ENCODE measurements at regions of chr5 and their contacts with region 1.

Region 1: GRCh38 chr5:150560401-150561193 is 52.7 kb downstream of the NDST1 start:
- DNase-seq: peak; percentile 97
- H3K4me3 Mint-ChIP-seq: peak overlapping the region; percentile 17
- H3K27ac Mint-ChIP-seq: peak overlapping the region; percentile 24
- H3K4me1 Mint-ChIP-seq: peaks cover 14% of the 10 kb centered on the region
- H3K27me3 Mint-ChIP-seq: no peaks in the 10 kb centered on the region
- CTCF ChIP-seq: peak; percentile 94

Region 2: DNA sequence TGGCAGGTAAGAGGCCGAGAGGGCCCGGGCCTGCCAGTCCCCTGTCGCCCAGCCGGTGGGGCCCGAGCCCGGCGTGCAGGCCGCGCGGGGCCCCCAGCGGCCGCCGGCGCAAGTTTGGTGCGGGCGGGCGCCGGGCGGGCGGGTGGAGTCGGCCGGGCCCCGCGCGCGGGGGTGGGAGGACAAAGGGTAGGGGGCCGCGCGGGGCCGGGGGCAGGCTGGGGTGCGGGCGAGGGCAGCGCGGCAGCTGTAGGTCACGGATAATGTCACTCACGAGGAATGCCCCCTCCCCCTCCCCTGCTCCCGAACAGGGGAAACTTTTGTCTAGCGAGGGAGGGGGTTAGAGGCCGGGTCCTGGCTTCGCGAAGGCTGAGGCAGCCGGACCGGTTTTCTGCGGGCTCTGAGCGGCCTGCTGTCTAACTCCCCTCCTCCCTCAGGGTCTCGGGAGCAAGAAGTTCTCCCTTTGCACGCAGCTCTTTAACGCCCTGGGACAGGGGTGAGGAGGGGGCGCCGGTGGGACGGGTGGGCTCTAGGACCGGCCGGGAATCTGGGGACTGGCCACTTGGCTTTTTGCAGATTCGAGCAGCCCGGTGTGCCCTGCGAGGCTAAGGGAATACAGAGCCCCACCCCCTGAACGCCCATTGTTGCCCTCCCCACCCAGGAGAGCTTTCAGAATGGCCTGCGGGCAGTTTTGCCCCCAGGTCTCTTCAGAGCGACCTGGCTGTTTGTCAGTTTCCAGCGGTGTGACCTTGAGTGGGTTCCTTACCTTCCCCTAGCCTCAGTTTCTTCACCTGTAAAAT is 74.0 kb before region 1 on chr5:
- CTCF ChIA-PET with region 1: interaction called, 11 read pairs
- POLR2A ChIA-PET with region 1: interaction called, 3 read pairs
- intact Hi-C with region 1: no loop called
- DNase-seq: peak; percentile 51
- H3K4me3 Mint-ChIP-seq: peak overlapping the region; percentile 72
- H3K27ac Mint-ChIP-seq: peak overlapping the region; percentile 63
- H3K4me1 Mint-ChIP-seq: peaks cover 43% of the 10 kb centered on the region
- H3K27me3 Mint-ChIP-seq: no peaks in the 10 kb centered on the region
- CTCF ChIP-seq: peak; percentile 13

Region 3: DNA sequence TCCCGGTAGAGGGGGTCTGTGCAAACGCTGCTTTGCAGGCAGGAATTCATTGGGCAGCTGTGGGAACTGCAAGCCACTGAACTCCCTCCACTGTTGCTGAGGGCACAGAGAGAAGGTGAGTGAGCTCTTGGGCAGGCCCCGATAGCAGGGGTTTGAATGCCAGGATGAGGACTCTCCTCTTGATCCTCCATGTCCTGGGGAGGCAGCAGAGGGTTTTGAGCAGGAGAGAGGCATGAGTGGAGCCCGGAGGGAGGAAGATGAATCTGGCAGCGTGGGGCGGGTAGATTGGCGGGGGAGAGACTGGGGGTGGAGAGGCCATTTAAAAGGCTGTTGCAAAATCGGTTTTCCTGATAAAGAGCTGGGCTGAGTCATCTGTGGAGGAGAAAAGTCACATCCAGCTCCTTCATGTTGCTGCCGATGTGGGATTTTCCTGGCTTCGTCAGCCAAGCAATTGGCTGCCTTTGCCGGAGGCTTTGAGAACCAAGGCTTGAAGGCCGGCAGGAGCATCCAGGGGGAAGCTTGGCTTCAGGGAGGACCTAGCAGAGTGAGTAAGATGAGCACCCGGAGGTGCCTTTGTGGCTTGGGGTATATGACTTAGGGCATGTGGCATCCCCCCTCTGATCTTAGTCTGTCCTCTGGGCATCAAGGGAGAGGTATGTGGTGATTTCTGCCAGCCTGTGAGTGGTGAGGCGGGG is 79.9 kb after region 1 on chr5 and contains the start of gene SYNPO:
- CTCF ChIA-PET with region 1: interaction called, 84 read pairs
- POLR2A ChIA-PET with region 1: interaction called, 7 read pairs
- intact Hi-C with region 1: no loop called
- DNase-seq: peak; percentile 99
- H3K4me3 Mint-ChIP-seq: peak within 1 kb of the TSS; percentile 68
- H3K27ac Mint-ChIP-seq: peak within 1 kb of the TSS; percentile 86
- H3K4me1 Mint-ChIP-seq: peaks cover 94% of the 10 kb centered on the region
- H3K27me3 Mint-ChIP-seq: no peaks in the 10 kb centered on the region
- CTCF ChIP-seq: no peak
- total RNA-seq, gene SYNPO: 6.3 and 7.1 TPM in 2 replicates

Region 4: DNA sequence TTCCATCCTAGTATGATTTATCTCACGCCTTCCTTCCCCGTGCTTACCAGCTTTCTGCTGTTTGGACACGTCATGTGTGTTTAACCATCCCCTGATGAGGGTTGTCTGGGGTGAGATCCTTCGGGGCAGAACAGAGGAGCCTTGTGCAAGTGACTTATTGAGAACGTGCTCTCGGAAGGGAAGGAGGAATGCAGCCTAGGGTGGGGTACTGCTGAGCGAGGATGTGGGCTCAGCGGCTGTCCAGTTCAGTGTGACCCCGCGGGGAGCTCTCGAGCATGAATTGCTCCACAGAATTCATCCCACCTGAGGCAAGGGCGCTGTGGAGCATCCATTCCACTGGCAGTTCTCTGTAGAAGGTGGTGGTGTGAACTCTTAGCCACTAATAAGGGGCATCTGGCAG is 104.4 kb after region 1 on chr5:
- CTCF ChIA-PET with region 1: interaction called, 429 read pairs
- POLR2A ChIA-PET with region 1: interaction called, 3 read pairs
- intact Hi-C with region 1: no loop called
- DNase-seq: no peak
- H3K4me3 Mint-ChIP-seq: no peak overlapping the region
- H3K27ac Mint-ChIP-seq: no peak overlapping the region
- H3K4me1 Mint-ChIP-seq: no peaks in the 10 kb centered on the region
- H3K27me3 Mint-ChIP-seq: peaks cover 18% of the 10 kb centered on the region
- CTCF ChIP-seq: no peak

Region 5: GRCh38 chr5:150710165-150710564 is 149.6 kb after region 1 on chr5:
- CTCF ChIA-PET with region 1: interaction called, 27 read pairs
- POLR2A ChIA-PET with region 1: no interaction called
- intact Hi-C with region 1: loop called (anchors 1 kb)
- DNase-seq: peak; percentile 25
- H3K4me3 Mint-ChIP-seq: no peak overlapping the region
- H3K27ac Mint-ChIP-seq: no peak overlapping the region
- H3K4me1 Mint-ChIP-seq: no peaks in the 10 kb centered on the region
- H3K27me3 Mint-ChIP-seq: no peaks in the 10 kb centered on the region
- CTCF ChIP-seq: peak; percentile 27

Region 6: GRCh38 chr5:150778517-150779396 is 218.2 kb after region 1 on chr5 and contains the start of gene SMIM3:
- CTCF ChIA-PET with region 1: interaction called, 61 read pairs
- POLR2A ChIA-PET with region 1: interaction called, 8 read pairs
- intact Hi-C with region 1: loop called (anchors 1 kb)
- DNase-seq: peak; percentile 84
- H3K4me3 Mint-ChIP-seq: peak within 1 kb of the TSS; percentile 99
- H3K27ac Mint-ChIP-seq: peak within 1 kb of the TSS; percentile 91
- H3K4me1 Mint-ChIP-seq: peaks cover 47% of the 10 kb centered on the region
- H3K27me3 Mint-ChIP-seq: no peaks in the 10 kb centered on the region
- CTCF ChIP-seq: peak; percentile 54
- total RNA-seq, gene SMIM3: 21.7 and 26.1 TPM in 2 replicates

Region 7: GRCh38 chr5:150853561-150853960 is 293.0 kb after region 1 on chr5:
- CTCF ChIA-PET with region 1: interaction called, 92 read pairs
- POLR2A ChIA-PET with region 1: no interaction called
- intact Hi-C with region 1: no loop called
- DNase-seq: no peak
- H3K4me3 Mint-ChIP-seq: no peak overlapping the region
- H3K27ac Mint-ChIP-seq: no peak overlapping the region
- H3K4me1 Mint-ChIP-seq: no peaks in the 10 kb centered on the region
- H3K27me3 Mint-ChIP-seq: no peaks in the 10 kb centered on the region
- CTCF ChIP-seq: no peak